PC-3 (cell line): ENCODE measurements at regions of chr18 and their contacts with region 1.

Region 1: DNA sequence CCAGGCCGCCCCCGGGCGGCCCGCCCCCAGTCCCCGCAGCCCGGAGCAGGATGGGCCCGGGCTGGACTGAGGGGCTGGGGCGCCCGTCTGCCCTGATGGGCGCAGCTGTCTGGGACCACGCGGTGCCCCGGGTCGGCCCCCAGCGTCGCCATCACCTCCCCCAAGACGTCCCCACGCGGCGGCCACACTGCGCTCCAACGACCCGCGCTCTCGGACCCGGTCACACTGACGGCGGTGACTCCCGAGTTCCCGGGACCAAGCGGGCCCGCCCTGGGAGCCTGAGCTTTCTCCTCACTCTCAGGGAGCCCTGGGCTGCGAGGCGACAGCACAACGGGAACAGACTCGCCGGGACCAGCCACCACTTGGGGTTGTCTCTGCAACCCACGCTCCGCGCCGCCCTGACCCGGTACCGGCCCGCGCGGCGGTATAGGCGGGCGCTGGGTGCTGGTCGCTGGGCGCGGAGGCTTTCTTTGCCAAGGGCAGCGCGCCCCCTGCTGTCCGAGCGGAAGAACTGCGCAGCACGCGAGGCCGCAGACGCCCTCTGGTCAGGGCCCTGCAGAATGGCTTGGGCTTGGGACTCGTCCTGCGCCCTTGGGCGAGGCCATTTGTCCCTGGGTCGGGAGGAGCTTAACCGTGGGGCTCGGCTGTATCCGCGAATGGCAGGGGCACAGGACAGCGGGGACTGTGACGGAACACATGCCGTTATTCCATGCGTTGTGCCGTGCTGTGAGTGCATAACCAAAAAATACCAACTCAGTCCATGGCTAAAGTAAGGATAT is 54.8 kb upstream of the ANKRD62 start:
- DNase-seq: peak; percentile 83
- ATAC-seq: peak; percentile 93
- H3K4me3 ChIP-seq: peak overlapping the region; percentile 74
- H3K27ac ChIP-seq: no peak overlapping the region
- H3K4me1 ChIP-seq: peaks cover 13% of the 10 kb centered on the region; the same call in 1 of the 2 replicates
- H3K27me3 ChIP-seq: no peaks in the 10 kb centered on the region
- CTCF ChIP-seq: peak; percentile 94

Region 2: GRCh38 chr18:11654736-11655605 is 383.9 kb before region 1 on chr18:
- CTCF ChIA-PET with region 1: no interaction called
- POLR2A ChIA-PET with region 1: no interaction called
- intact Hi-C with region 1: loop called (anchors 5 kb)
- DNase-seq: peak; percentile 62
- ATAC-seq: peak; percentile 94
- H3K4me3 ChIP-seq: peak overlapping the region; percentile 6; the same call in 1 of the 2 replicates
- H3K27ac ChIP-seq: no peak overlapping the region
- H3K4me1 ChIP-seq: no peaks in the 10 kb centered on the region
- H3K27me3 ChIP-seq: peaks cover 83% of the 10 kb centered on the region
- CTCF ChIP-seq: peak; percentile 97

Region 3: GRCh38 chr18:11937874-11938478 is 100.9 kb before region 1 on chr18:
- CTCF ChIA-PET with region 1: interaction called, 36 read pairs
- POLR2A ChIA-PET with region 1: no interaction called
- intact Hi-C with region 1: loop called (anchors 1 kb)
- DNase-seq: peak; percentile 87
- ATAC-seq: peak; percentile 84
- H3K4me3 ChIP-seq: no peak overlapping the region
- H3K27ac ChIP-seq: no peak overlapping the region
- H3K4me1 ChIP-seq: no peaks in the 10 kb centered on the region
- H3K27me3 ChIP-seq: no peaks in the 10 kb centered on the region
- CTCF ChIP-seq: peak; percentile 91

Region 4: GRCh38 chr18:12005538-12006487 is 33.0 kb before region 1 on chr18:
- CTCF ChIA-PET with region 1: interaction called, 13 read pairs
- POLR2A ChIA-PET with region 1: interaction called, 3 read pairs
- intact Hi-C with region 1: no loop called
- DNase-seq: peak; percentile 94
- ATAC-seq: peak; percentile 84
- H3K4me3 ChIP-seq: peak overlapping the region; percentile 54
- H3K27ac ChIP-seq: peak overlapping the region; percentile 99
- H3K4me1 ChIP-seq: peaks cover 34% of the 10 kb centered on the region
- H3K27me3 ChIP-seq: no peaks in the 10 kb centered on the region
- CTCF ChIP-seq: no peak

Region 5: DNA sequence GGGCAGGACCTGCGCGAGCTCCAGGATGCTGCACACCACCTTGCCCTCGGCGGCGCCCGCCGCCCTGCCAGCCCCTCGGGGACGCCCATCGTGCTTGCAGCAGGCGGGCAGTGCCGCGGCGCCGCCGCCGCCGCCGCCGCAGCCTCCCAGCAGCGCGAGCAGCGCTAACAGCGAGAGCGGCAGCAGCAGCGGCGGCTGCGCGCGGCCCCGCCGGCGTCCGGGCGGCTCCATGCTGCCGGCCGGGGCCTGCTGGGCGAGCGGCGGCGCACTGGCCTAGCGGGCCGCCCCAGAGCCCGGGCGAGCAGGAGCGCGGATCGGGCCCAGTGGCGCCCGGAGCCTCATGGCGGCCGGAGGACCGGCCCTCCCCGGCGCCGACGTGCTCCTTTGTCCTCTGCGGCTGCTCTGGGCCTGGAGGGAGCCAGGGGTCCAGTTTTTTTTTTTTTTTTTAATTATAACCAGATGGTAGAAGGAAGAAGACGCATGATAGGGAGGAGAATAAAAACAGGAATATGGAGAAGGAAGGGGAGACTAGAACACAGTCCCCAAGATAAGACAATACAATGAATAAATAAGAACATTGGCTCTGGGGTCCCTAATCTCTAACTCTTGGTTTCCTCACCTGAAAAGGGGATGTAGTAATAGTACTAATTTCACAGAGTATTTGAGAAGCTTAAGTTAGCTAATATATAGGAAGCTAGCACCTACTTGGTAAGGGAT is 37.8 kb after region 1 on chr18:
- CTCF ChIA-PET with region 1: no interaction called
- POLR2A ChIA-PET with region 1: no interaction called
- intact Hi-C with region 1: no loop called
- DNase-seq: peak; percentile 46
- ATAC-seq: peak; percentile 86
- H3K4me3 ChIP-seq: peak overlapping the region; percentile 63
- H3K27ac ChIP-seq: no peak overlapping the region
- H3K4me1 ChIP-seq: no peaks in the 10 kb centered on the region
- H3K27me3 ChIP-seq: 0 out of 2 replicates have a peak, but pooled peaks cover 5% of the 10 kb centered on the region
- CTCF ChIP-seq: no peak

Region 6: GRCh38 chr18:12441475-12442034 is 402.7 kb after region 1 on chr18:
- CTCF ChIA-PET with region 1: no interaction called
- POLR2A ChIA-PET with region 1: no interaction called
- intact Hi-C with region 1: no loop called
- DNase-seq: no peak
- ATAC-seq: no peak; the same call in 1 of the 2 replicates
- H3K4me3 ChIP-seq: no peak overlapping the region
- H3K27ac ChIP-seq: no peak overlapping the region
- H3K4me1 ChIP-seq: no peaks in the 10 kb centered on the region
- H3K27me3 ChIP-seq: no peaks in the 10 kb centered on the region
- CTCF ChIP-seq: no peak